Naive thymus-derived CD4-positive, alpha-beta T cell (primary cell): ENCODE measurements at regions of chr1 and their contacts with region 1.

Region 1: GRCh38 chr1:25997828-25998761 is at the start of gene PAFAH2:
- DNase-seq: peak; percentile 83 to 99 (median 98)
- ATAC-seq: peak; percentile 98
- H3K4me3 ChIP-seq: peak within 1 kb of the TSS; percentile 76
- H3K4me3 Mint-ChIP-seq: peak within 1 kb of the TSS; percentile 91 to 99 (median 96)
- H3K27ac ChIP-seq: peak within 1 kb of the TSS; percentile 89
- H3K27ac Mint-ChIP-seq: peak within 1 kb of the TSS; percentile 96 to 99 (median 99)
- H3K4me1 ChIP-seq: peaks cover 8 to 18% of the 10 kb centered on the region in 2 donors
- H3K4me1 Mint-ChIP-seq: peaks cover 19 to 50% (median 40%) of the 10 kb centered on the region in 7 donors
- H3K27me3 ChIP-seq: no peaks in the 10 kb centered on the region
- H3K27me3 Mint-ChIP-seq: no peaks in the 10 kb centered on the region
- total RNA-seq, gene PAFAH2: 11.4 to 36.0 (median 12.7) TPM

Region 2: GRCh38 chr1:25837262-25837875 is 160.7 kb before region 1 on chr1:
- CTCF ChIA-PET with region 1: no interaction called
- POLR2A ChIA-PET with region 1: no interaction called
- intact Hi-C with region 1: loop called in 1 of 2 experiments (anchors 5 kb)
- DNase-seq: no peak
- ATAC-seq: no peak
- H3K4me3 ChIP-seq: no peak overlapping the region
- H3K4me3 Mint-ChIP-seq: no peak overlapping the region
- H3K27ac ChIP-seq: no peak overlapping the region
- H3K27ac Mint-ChIP-seq: no peak overlapping the region
- H3K4me1 ChIP-seq: peaks cover 0 to 3% of the 10 kb centered on the region in 2 donors
- H3K4me1 Mint-ChIP-seq: peaks cover 0 to 13% (median 4%) of the 10 kb centered on the region in 7 donors
- H3K27me3 ChIP-seq: no peaks in the 10 kb centered on the region
- H3K27me3 Mint-ChIP-seq: no peaks in the 10 kb centered on the region

Region 3: DNA sequence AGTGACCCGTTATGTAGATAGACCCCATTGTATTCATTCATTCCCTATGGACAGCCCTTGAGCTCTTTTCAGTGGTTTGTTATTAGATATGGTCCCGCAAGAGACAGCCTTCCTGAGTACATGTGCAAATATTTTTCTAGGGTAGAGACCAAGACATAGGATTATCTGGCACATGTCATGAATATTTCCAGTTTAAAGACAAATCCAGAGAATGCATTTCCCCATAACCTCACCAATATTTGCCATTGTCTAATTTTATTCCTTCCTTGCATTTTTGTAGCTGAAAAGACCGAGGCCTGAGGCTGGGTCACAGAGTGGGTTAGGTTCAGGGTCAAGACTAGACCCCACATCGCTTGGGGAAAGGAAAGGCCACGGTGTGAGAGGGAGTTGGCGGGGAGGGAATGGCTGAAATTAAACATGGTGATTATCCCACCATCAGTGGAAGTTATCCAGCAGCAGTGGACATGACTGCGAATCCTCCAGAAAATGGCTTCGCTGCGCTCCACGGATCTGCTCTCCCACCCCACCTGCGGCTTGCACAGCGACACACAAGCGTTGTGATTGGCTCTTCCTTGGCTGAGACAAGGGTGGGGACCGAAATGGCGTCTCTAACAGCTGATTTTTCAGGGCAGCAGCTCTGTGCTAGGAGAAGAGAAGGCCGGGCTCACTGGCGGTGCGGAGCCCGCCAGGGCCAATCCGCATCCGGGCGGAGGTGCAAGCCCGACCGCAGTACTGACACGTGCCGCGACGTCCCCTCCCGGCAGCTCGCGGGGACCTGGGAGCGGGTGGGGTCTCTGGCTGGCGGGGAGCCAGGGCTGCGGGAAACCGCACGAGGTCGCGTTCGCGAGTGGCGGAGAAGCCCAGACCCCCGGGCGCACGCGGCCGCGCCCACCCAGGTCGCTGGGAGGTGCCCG is 75.8 kb before region 1 on chr1:
- CTCF ChIA-PET with region 1: interaction called, 7 read pairs
- POLR2A ChIA-PET with region 1: interaction called, 17 read pairs
- intact Hi-C with region 1: loop called in 1 of 2 experiments (anchors 1 kb)
- DNase-seq: peak; percentile 26 to 64 (median 57)
- ATAC-seq: peak; percentile 84
- H3K4me3 ChIP-seq: peak overlapping the region; percentile 79
- H3K4me3 Mint-ChIP-seq: peak overlapping the region; percentile 78 to 91 (median 88)
- H3K27ac ChIP-seq: peak overlapping the region; percentile 60
- H3K27ac Mint-ChIP-seq: peak overlapping the region; percentile 31 to 90 (median 82)
- H3K4me1 ChIP-seq: peaks cover 19 to 20% of the 10 kb centered on the region in 2 donors
- H3K4me1 Mint-ChIP-seq: peaks cover 23 to 56% (median 43%) of the 10 kb centered on the region in 7 donors
- H3K27me3 ChIP-seq: no peaks in the 10 kb centered on the region
- H3K27me3 Mint-ChIP-seq: peaks cover 0 to 57% (median 0%) of the 10 kb centered on the region in 5 donors

Region 4: GRCh38 chr1:25971066-25971810 is 26.9 kb before region 1 on chr1:
- CTCF ChIA-PET with region 1: interaction called, 24 read pairs
- POLR2A ChIA-PET with region 1: interaction called, 173 read pairs
- intact Hi-C with region 1: loop called (anchors 1 kb)
- DNase-seq: peak in 7 of 9 donors; percentile 60 to 77 (median 69)
- ATAC-seq: peak; percentile 88
- H3K4me3 ChIP-seq: peak overlapping the region; percentile 34
- H3K4me3 Mint-ChIP-seq: peak overlapping the region; percentile 21 to 80 (median 61)
- H3K27ac ChIP-seq: peak overlapping the region; percentile 61
- H3K27ac Mint-ChIP-seq: peak overlapping the region; percentile 74 to 93 (median 85)
- H3K4me1 ChIP-seq: peaks cover 0 to 23% of the 10 kb centered on the region in 2 donors
- H3K4me1 Mint-ChIP-seq: peaks cover 33 to 74% (median 52%) of the 10 kb centered on the region in 7 donors
- H3K27me3 ChIP-seq: no peaks in the 10 kb centered on the region
- H3K27me3 Mint-ChIP-seq: no peaks in the 10 kb centered on the region

Region 5: GRCh38 chr1:26431979-26432695 is 434.0 kb after region 1 on chr1 and contains the start of gene DHDDS:
- CTCF ChIA-PET with region 1: no interaction called
- POLR2A ChIA-PET with region 1: no interaction called
- intact Hi-C with region 1: loop called in 1 of 2 experiments (anchors 1 kb)
- DNase-seq: peak; percentile 95 to 98 (median 97)
- ATAC-seq: peak; percentile 99
- H3K4me3 ChIP-seq: peak within 1 kb of the TSS; percentile 88
- H3K4me3 Mint-ChIP-seq: peak within 1 kb of the TSS; percentile 92 to 99 (median 96)
- H3K27ac ChIP-seq: peak within 1 kb of the TSS; percentile 76
- H3K27ac Mint-ChIP-seq: peak within 1 kb of the TSS; percentile 90 to 99 (median 93)
- H3K4me1 ChIP-seq: peaks cover 11 to 15% of the 10 kb centered on the region in 2 donors
- H3K4me1 Mint-ChIP-seq: peaks cover 14 to 26% (median 22%) of the 10 kb centered on the region in 7 donors
- H3K27me3 ChIP-seq: no peaks in the 10 kb centered on the region
- H3K27me3 Mint-ChIP-seq: peaks cover 0 to 15% (median 0%) of the 10 kb centered on the region in 5 donors
- total RNA-seq, gene DHDDS: 28.1 to 58.9 (median 37.7) TPM